ENCODE measurements at regions of chr13 and their contacts with region 1.

Region 1: GRCh38 chr13:107284173-107284572 is 716.2 kb upstream of the ARGLU1 start:
- DNase-seq: no peak
- ATAC-seq: no peak
- H3K4me3 ChIP-seq: no peak overlapping the region
- H3K27ac ChIP-seq: no peak overlapping the region
- H3K4me1 ChIP-seq: no peaks in the 10 kb centered on the region
- H3K27me3 ChIP-seq: no peaks in the 10 kb centered on the region
- CTCF ChIP-seq: no peak

Region 2: DNA sequence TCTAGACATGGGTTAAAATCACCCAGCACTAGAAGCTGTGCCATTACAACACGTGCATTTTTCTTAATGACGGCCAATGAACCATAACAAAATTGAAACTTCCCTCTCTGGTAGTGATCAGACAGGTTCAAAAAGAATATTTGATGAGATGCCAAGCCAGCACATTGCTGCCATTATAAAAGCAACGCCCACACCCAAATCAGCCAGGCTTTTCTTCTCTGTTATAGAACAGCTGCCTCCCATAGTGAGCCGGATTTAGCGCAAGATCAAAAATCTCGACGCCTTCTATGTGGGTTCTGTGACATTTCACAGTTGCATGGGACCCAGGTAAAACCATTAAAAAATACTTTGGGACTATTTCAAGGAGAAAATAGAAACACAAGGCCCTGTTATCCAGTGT is 1906.7 kb before region 1 on chr13:
- intact Hi-C with region 1: loop called in 1 of 10 experiments (anchors 5 kb)
- DNase-seq: no peak
- ATAC-seq: no peak
- H3K4me3 ChIP-seq: no peak overlapping the region
- H3K27ac ChIP-seq: no peak overlapping the region
- H3K4me1 ChIP-seq: no peaks in the 10 kb centered on the region
- H3K27me3 ChIP-seq: no peaks in the 10 kb centered on the region
- CTCF ChIP-seq: no peak

Region 3: GRCh38 chr13:106445996-106446395 is 838.2 kb before region 1 on chr13:
- intact Hi-C with region 1: no loop called
- DNase-seq: no peak
- ATAC-seq: no peak
- H3K4me3 ChIP-seq: no peak overlapping the region
- H3K27ac ChIP-seq: no peak overlapping the region
- H3K4me1 ChIP-seq: no peaks in the 10 kb centered on the region
- H3K27me3 ChIP-seq: no peaks in the 10 kb centered on the region
- CTCF ChIP-seq: no peak

Measured in heart right ventricle (tissue), 16 donors.